ENCODE measurements at regions of chr22 and their contacts with region 1.

Region 1: DNA sequence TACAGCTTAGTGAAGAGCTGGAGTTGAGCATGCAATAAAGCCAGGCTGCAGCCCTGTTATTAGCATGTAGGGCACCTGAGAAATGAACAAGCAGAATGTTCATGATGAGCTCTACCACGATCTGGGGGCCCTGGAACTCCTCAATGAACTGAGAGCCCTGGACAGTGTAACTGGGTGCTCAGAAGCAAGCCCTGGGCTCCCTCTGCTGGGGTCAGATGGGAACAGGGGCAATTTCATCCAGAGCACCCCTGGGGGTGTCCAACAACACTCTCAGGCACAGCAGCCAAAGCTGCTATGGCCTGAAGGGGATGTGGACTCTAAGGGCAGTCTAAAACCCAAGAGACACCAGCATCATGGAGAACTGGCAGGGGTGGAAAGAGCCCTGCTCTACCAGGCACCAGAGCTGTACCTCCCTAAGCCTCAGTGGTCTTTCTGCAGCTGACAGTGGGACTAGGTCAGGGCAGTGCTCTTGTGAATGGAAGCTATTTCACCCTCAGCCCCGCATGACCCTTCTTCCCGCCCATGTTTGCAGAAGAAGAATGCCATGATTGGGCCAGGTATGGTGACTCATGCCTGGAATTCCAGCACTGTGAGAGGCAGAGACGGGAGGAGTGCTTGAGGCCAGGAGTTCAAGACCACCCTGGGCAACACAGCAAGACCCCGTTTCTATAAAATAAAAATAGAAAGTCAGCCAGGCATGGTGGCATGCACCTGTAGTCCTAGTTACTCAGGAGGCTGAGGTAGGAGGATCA is 28.9 kb downstream of the THOC5 start:
- DNase-seq: peak; percentile 27 to 47
- ATAC-seq: peak; percentile 82

Region 2: DNA sequence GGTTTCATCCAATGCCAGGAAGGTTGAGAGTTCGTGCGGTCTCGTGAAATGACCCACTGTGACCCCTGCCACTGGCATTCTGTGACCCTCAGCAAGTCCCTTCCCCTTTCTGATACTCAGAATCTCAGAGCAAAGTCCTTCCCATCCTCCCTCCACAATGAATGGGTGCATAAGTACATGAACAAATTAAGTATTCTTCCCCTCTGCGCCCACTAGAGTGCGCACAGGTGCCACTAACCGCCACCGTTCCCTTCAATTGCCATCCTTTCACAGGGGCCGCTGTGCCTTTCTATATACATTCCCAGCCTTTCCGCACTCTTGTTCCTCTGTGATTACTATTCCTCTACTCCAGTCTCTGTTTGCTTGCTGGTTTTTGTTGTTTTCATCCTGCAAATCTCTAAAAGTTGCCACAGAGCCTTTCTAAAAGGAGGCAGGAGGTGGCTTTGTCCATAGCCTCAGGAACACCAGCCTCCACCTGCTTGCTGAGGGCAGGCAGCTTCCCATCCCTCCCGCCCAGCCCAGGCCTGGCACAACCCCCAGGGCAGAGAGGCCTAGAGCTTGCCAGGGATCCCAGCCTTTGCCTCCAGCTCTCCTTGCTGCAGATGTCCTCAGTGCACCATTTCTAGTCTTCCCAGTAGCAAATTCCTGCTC is 129.6 kb before region 1 on chr22:
- intact Hi-C with region 1: loop called in 1 of 2 experiments (anchors 10 kb)
- DNase-seq: peak; percentile 60 to 79
- ATAC-seq: peak; percentile 86

Region 3: DNA sequence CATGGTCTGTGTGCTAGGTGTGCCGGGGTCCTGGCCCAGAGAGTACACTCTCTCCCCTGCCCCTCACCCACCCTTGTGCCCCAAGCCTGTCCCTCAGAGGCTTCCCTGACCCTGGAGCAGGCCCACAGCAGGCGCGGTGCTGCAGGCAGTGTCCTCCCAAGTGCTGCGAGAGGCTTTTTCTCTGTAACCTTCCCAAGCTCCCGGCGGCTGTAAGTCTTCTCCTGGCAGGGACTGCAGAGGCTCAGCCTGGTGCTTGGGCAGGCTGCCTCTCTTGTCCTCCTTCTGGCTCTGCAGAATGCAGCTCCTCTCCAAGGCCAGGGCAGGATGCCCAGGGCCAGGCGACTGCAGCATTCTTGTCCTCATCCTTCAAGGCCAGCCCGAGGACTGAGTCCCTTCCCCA is 70.3 kb before region 1 on chr22:
- intact Hi-C with region 1: no loop called
- DNase-seq: no peak
- ATAC-seq: no peak

Region 4: GRCh38 chr22:29587938-29588699 is 63.5 kb after region 1 on chr22:
- intact Hi-C with region 1: no loop called
- DNase-seq: no peak
- ATAC-seq: no peak

Measured in left colon (tissue), 2 donors.